ENCODE measurements at regions of chr1 and their contacts with region 1.

Region 1: GRCh38 chr1:154425172-154425571 is 20.0 kb downstream of the IL6R start:
- DNase-seq: no peak
- ATAC-seq: no peak
- H3K4me3 ChIP-seq: no peak overlapping the region
- H3K27ac ChIP-seq: no peak overlapping the region
- H3K4me1 ChIP-seq: peaks cover 46% of the 10 kb centered on the region
- H3K27me3 ChIP-seq: no peaks in the 10 kb centered on the region
- CTCF ChIP-seq: no peak

Region 2: GRCh38 chr1:154288661-154289060 is 136.5 kb before region 1 on chr1:
- CTCF ChIA-PET with region 1: no interaction called
- POLR2A ChIA-PET with region 1: interaction called, 13 read pairs
- in situ Hi-C with region 1: no loop called
- intact Hi-C with region 1: no loop called
- DNase-seq: no peak
- ATAC-seq: no peak
- H3K4me3 ChIP-seq: no peak overlapping the region
- H3K27ac ChIP-seq: no peak overlapping the region
- H3K4me1 ChIP-seq: no peaks in the 10 kb centered on the region
- H3K27me3 ChIP-seq: no peaks in the 10 kb centered on the region
- CTCF ChIP-seq: no peak